Dorsolateral prefrontal cortex (tissue), 120 donors: ENCODE measurements at regions of chr11 and their contacts with region 1.

Region 1: GRCh38 chr11:103682318-103683184 is 353.9 kb upstream of the DDI1 start:
- DNase-seq: peak; percentile 20 to 78 (median 62)
- H3K4me3 ChIP-seq: peak overlapping the region in 22 of 59 donors; percentile 5 to 38 (median 23)
- H3K27ac ChIP-seq: peak overlapping the region in 4 of 59 donors; percentile 4 to 58 (median 25)
- H3K27me3 ChIP-seq: no peaks in the 10 kb centered on the region
- CTCF ChIP-seq: peak; percentile 61 to 96 (median 88)

Region 2: GRCh38 chr11:103920449-103920848 is 237.9 kb after region 1 on chr11:
- intact Hi-C with region 1: loop called in 1 of 2 experiments (anchors 5 kb)
- DNase-seq: no peak
- H3K4me3 ChIP-seq: no peak overlapping the region
- H3K27ac ChIP-seq: no peak overlapping the region
- H3K27me3 ChIP-seq: no peaks in the 10 kb centered on the region
- CTCF ChIP-seq: no peak

Region 3: DNA sequence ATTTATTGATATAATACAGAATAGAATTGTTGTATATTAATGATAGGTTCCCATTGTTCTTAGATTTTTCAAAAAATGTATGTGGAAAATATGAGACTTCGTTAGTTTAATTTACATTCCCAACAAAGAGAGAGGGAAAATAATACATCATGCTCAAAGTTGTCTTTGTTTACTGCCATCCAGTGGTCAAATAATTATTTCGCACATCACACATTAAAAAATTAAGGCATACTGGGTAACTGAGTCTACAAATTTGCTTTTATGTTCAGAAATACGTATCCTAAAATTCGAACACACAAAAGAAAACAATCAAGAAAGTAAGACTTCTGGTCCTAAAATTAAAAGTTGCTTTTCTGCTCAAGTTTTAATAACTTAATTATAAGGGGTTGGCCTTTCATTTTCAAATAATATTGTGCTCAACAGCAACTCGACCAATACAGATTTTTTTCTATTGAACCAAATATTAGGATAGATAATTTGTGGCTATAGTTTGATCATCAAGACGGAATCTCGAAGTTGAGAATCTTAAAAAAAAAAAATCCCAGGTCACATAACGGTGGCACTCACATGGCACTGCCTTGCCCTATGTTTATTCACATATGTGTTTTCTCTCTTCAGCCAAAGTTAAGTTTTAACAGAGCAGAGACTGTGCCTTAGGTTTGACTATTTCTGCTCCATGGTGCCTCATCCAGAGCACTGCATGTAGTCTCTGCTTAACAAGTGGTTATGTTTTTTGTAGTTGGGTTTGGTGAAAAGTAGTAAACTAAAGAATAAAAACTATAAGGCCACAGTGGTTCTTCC is 469.1 kb after region 1 on chr11:
- intact Hi-C with region 1: loop called in 1 of 2 experiments (anchors 5 kb)
- DNase-seq: no peak
- H3K4me3 ChIP-seq: no peak overlapping the region
- H3K27ac ChIP-seq: no peak overlapping the region
- H3K27me3 ChIP-seq: no peaks in the 10 kb centered on the region
- CTCF ChIP-seq: peak in 43 of 56 donors; percentile 9 to 64 (median 36)